ENCODE measurements at regions of chr2 and their contacts with region 1.

Region 1: GRCh38 chr2:240809276-240809675 is 10.7 kb downstream of the KIF1A start:
- DNase-seq: no peak
- H3K4me3 ChIP-seq: no peak overlapping the region
- H3K27ac ChIP-seq: no peak overlapping the region
- H3K4me1 ChIP-seq: no peaks in the 10 kb centered on the region
- H3K27me3 ChIP-seq: no peaks in the 10 kb centered on the region
- CTCF ChIP-seq: no peak
- POLR2A ChIP-seq: no peak

Region 2: GRCh38 chr2:240832205-240832727 is 23.0 kb after region 1 on chr2:
- intact Hi-C with region 1: loop called (anchors 2 kb)
- DNase-seq: peak; percentile 68 to 81
- H3K4me3 ChIP-seq: peak overlapping the region in 2 of 3 donors; percentile 38 to 47
- H3K27ac ChIP-seq: peak overlapping the region in 1 of 2 donors; percentile 25
- H3K4me1 ChIP-seq: peaks cover 0 to 8% of the 10 kb centered on the region in 2 donors
- H3K27me3 ChIP-seq: peaks cover 2 to 18% of the 10 kb centered on the region in 2 donors
- CTCF ChIP-seq: no peak
- POLR2A ChIP-seq: no peak